Activated CD4-positive, alpha-beta memory T cell treated with anti-CD3 and anti-CD28 coated beads for 36 hours (primary cell): ENCODE measurements at regions of chr16 and their contacts with region 1.

Region 1: DNA sequence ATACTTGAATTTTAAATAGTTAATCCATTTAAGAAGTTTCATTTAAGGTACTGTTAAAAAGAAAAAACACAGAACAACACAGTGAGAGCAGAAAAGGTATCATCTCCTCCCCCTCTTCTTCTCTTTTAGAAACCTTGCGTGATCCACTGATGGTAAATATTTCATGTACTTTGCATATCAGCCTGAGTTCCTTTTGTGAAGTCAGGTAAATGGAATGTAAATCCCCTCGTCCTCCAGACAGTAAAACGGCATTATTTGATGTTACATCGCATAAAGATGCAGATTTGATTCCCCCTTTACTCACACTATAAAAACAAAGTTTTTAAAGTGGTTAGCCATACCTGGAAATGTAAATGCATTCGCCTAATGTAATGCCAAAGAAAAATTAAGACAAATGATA is 234.4 kb downstream of the WWOX start:
- DNase-seq: no peak
- H3K4me3 Mint-ChIP-seq: no peak overlapping the region
- H3K27ac Mint-ChIP-seq: no peak overlapping the region
- H3K4me1 Mint-ChIP-seq: no peaks in the 10 kb centered on the region
- H3K27me3 Mint-ChIP-seq: no peaks in the 10 kb centered on the region

Region 2: DNA sequence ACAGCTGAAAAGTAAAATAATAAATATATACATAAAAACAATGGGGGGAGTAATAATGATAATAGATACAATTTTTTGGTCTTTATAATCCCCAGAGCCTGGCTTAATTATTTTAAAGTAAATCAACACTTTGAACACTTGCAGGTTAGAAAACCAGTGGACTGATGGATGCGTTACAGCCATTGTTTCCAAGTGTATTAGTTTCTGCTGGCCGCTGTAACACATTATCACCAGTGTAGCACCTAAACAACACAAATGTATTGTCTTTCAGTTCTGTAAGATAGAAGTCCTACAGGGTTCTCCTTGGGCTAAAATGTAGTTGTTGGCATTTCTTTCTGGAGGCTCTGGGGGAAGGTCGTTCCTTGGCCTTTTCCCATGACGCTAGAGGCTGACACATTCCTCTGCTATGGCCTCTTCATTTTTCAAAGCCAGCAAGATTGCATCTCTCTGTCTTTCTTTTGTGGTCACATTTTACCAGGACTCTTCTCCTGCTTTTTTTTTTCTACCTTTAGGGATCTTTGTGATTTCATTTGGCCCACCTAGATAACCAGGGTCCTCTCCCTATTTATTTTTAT is 117.6 kb before region 1 on chr16:
- CTCF ChIA-PET with region 1: no interaction called
- POLR2A ChIA-PET with region 1: no interaction called
- intact Hi-C with region 1: no loop called
- DNase-seq: no peak
- H3K4me3 Mint-ChIP-seq: no peak overlapping the region
- H3K27ac Mint-ChIP-seq: no peak overlapping the region
- H3K4me1 Mint-ChIP-seq: no peaks in the 10 kb centered on the region
- H3K27me3 Mint-ChIP-seq: no peaks in the 10 kb centered on the region

Region 3: DNA sequence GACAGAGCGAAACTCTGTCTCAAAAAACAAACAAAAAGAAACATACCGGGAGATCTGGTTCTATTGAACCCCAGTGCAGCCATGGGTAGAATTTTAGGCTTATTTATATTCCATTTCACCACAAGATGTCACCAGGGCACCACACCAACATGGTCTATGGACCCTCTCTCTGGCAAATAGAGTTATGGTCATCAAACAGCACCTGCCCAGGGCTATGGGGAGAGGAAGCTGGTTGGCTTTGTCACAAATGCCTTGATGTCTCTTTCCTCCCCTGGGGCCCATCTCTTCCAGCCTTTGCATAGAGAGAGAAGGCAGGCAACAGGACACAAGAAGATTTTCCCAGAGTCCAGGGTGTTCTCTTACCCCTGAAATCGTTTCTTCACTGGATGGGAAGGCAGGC is 106.0 kb before region 1 on chr16:
- CTCF ChIA-PET with region 1: no interaction called
- POLR2A ChIA-PET with region 1: no interaction called
- intact Hi-C with region 1: no loop called
- DNase-seq: no peak
- H3K4me3 Mint-ChIP-seq: no peak overlapping the region
- H3K27ac Mint-ChIP-seq: no peak overlapping the region
- H3K4me1 Mint-ChIP-seq: no peaks in the 10 kb centered on the region
- H3K27me3 Mint-ChIP-seq: no peaks in the 10 kb centered on the region

Region 4: DNA sequence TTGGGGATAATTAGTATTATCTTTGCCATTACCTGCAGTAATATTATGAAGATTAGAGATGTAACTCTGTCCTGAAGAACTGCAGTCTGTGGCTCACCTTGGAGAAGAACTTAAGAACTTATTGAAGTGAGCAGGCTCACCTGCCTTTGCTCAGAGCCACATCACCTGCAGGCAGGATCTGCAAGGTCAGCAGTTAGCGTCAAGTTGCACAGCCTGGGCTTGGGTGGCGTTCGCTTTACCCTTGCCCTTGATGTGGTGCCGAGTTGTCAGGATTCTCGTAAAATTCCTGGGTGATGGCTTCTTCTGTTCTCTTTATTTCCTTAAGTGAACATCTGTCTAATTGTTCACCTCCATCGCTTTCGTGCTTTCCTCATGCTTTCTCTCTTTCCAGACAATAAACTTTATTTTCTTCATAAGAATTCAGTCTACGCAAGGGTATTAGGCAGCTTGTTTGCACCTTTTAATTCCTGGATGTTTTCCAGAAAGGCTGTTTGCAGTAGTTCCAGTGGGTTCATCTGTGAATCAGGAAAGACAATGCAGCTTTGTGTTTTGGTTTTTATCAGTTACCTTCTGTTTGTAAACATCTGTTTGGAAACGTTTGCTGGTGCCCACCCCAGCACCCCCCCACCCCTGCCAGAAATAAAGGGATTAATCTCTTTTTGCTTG is 19.9 kb after region 1 on chr16:
- CTCF ChIA-PET with region 1: no interaction called
- POLR2A ChIA-PET with region 1: no interaction called
- intact Hi-C with region 1: loop called (anchors 1 kb)
- DNase-seq: no peak
- H3K4me3 Mint-ChIP-seq: no peak overlapping the region
- H3K27ac Mint-ChIP-seq: no peak overlapping the region
- H3K4me1 Mint-ChIP-seq: no peaks in the 10 kb centered on the region
- H3K27me3 Mint-ChIP-seq: no peaks in the 10 kb centered on the region

Region 5: DNA sequence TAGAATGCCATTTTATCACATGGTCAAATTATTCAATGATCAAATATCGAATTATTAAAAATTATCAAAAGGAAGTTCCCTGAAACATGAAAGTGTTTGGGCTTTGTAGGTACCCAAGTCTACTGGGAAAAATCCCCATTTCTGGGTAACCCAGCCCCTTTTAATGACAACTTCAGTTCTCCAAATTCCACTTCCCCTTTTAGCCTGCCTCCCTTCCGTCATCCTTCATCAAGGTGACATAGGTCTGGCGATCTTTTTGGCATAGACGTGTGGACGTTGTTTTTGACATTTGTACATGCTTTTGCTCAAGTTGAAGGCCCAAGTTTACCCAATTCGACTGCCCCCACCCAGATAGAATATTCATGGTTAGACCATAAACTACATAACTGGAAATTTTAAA is 605.8 kb after region 1 on chr16:
- CTCF ChIA-PET with region 1: no interaction called
- POLR2A ChIA-PET with region 1: no interaction called
- intact Hi-C with region 1: no loop called
- DNase-seq: no peak
- H3K4me3 Mint-ChIP-seq: no peak overlapping the region
- H3K27ac Mint-ChIP-seq: no peak overlapping the region
- H3K4me1 Mint-ChIP-seq: no peaks in the 10 kb centered on the region
- H3K27me3 Mint-ChIP-seq: no peaks in the 10 kb centered on the region